Cardiac septum (tissue), 1 donor: ENCODE measurements at regions of chr14 and their contacts with region 1.

Region 1: GRCh38 chr14:47040550-47040949 is 389.0 kb upstream of the RPL10L start:
- DNase-seq: no peak

Region 2: DNA sequence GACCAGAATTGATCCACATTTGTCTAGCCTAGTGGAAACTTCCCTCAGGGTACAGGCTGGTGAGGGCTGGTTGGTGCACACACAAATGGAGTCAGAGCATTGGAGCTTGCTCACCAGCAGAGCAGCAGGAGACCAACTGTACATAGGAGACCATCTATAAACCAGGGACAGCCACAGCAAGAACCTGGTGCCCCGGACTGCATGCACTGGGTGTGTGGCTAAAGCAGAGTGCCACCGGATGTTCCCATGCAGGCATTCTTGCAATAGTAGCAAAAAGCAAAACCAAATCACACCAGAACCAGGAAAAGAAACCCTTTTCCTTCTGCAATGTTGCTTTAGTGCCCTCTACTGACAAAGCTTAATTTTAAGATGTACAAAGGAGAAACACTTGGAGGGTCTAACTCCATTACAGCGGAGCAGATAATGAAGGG is 498.5 kb after region 1 on chr14:
- intact Hi-C with region 1: loop called (anchors 10 kb)
- DNase-seq: no peak